Posterior cingulate gyrus (tissue), 11 donors: ENCODE measurements at regions of chr18 and their contacts with region 1.

Region 1: GRCh38 chr18:34322365-34323289 is 97.9 kb upstream of the NOL4 start:
- DNase-seq: peak; percentile 37 to 94 (median 74)

Region 2: GRCh38 chr18:32714571-32715148 is 1608.0 kb before region 1 on chr18:
- intact Hi-C with region 1: no loop called
- DNase-seq: peak in 4 of 10 donors; percentile 15 to 55 (median 24)

Region 3: DNA sequence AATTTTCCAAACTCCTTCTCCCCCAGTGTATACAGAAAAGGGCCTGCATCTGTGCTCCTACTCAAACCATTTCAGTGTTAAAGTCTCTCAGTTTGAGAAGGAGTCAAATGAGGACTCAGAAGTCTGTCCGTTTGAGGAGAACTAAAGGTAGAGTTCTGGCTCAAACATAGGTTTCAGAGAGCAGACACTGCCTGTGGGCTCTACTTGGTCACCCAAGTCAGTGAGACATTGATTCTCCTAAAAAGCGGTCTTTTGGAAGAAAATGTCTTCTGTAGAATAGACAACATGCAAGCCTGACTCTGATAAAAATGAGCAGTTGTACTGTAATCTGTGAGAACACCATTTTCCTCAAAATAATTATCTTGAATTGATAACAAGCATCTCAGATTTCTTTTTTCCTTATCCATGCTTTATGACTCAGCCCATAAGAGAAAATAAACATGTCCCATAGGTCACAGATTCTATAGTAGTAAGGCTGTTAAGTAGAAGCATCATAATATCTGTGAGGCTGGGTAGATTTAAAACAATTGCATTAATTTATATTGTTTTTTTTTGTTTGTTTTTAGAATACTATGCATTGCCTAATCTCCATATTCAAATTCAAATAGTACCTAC is 661.8 kb before region 1 on chr18:
- intact Hi-C with region 1: no loop called
- DNase-seq: no peak

Region 4: GRCh38 chr18:33839441-33840211 is 483.0 kb before region 1 on chr18:
- intact Hi-C with region 1: loop called (anchors 5 kb)
- DNase-seq: peak; percentile 15 to 86 (median 39)

Region 5: GRCh38 chr18:34122724-34123334 is 199.8 kb before region 1 on chr18:
- intact Hi-C with region 1: loop called (anchors 1 kb)
- DNase-seq: peak in 1 of 10 donors; percentile 16

Region 6: DNA sequence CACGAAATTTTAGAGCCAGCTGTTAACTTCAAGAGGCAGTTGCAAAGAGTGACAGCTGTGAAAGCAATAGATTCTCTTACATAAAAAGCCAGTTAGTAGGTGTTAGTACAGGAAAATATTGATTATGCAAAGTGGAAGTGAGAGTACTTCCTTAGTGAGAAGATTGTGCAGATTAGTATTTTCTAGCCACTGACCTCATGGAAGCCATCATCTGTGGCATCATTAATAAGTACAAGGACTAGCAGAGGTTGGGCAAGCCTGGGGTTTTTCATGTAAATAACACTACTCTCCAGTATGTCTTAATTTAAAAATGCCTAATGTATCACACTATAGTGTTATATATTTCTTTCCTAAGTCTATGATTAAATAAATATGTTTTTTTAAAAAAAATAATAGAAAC is 221.3 kb after region 1 on chr18:
- intact Hi-C with region 1: no loop called
- DNase-seq: no peak